Psoas muscle (tissue), 8 donors: ENCODE measurements at regions of chr16 and their contacts with region 1.

Region 1: DNA sequence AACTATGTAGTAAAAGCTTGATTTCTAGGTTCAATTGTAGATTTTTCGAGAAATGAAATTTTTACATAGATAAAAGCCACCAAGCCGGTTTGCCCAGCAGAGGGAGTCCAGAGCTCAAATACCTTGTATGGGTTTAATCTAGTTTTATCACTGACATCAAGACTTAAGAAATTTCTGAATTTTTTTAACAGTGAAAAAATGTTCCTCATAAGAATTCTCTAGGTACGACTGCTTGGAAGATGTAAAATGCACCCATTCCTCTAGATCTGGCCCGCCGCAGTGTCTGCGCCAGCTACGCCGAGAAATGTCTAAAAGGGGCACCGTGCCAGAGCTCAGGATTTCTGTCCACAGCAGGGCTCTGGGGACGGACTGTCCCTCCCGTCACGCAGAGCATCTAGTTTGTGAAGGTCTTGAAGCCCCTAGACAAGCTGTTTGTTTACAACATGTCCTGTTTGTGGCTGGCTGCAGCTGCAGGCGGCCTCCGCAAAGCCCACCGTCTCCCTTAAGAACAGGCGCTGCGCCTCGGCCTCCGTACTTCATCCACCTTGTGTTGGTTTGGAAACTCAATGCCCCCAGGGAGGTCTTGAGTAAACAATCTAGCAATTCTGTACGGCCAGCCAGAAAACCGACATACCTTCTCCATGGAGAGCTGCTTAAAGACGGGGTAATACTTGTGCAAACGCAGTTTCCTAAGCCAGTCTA is 24.8 kb downstream of the MAP1LC3B start:
- DNase-seq: no peak
- ATAC-seq: peak in 1 of 4 donors; percentile 53
- H3K4me3 ChIP-seq: no peak overlapping the region
- H3K27ac ChIP-seq: no peak overlapping the region
- H3K4me1 ChIP-seq: no peaks in the 10 kb centered on the region
- H3K27me3 ChIP-seq: no peaks in the 10 kb centered on the region
- CTCF ChIP-seq: peak; percentile 69

Region 2: GRCh38 chr16:87484487-87485331 is 67.7 kb after region 1 on chr16:
- intact Hi-C with region 1: no loop called
- DNase-seq: no peak
- ATAC-seq: no peak
- H3K4me3 ChIP-seq: no peak overlapping the region
- H3K27ac ChIP-seq: peak overlapping the region; percentile 50
- H3K4me1 ChIP-seq: peaks cover 72% of the 10 kb centered on the region
- H3K27me3 ChIP-seq: no peaks in the 10 kb centered on the region
- CTCF ChIP-seq: no peak

Region 3: DNA sequence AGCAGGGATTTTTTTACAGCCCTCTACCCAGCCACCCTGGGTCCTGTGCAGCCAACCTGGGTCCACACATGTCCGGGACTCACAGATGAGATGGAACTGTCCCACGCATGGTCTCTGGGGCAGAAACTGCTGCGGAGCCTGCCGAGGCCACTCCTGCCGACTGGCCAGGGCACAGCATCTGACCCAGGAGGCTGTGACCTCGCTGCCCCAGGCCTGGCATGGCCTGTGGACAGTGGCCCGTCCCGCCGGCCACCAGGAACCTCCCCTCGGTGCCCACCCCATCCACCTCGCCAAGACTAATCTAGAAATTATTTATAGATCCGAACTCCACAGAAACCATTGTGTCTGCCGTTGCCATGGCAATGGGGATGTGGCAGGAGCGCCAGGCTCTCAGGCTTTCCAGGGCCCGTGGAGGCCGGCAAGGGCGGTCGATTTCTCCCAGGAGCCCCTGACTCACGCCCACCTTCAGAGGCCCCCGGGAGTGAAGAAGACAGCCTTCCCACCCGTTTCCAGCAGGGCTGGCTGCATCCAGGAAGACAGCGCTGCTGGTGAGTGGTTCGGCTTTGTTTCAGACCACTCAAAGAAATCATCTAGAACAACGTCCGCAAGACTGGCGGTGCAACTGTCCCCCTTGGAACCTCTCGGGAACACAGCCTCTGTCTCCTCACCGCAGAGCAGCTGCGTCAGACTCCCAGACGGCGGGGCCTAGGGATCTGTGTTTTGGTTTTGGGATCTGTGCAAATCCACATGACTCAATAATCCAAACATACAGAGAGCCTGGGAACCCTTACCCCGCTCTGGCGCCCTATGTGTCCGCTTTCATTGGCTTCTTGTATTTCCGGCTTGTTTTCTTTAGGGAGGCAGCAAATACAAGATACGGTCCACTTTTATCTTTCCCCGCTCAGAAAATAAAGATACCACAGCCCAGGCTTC is 124.2 kb after region 1 on chr16:
- intact Hi-C with region 1: loop called in 1 of 2 experiments (anchors 5 kb)
- DNase-seq: no peak
- ATAC-seq: no peak
- H3K4me3 ChIP-seq: no peak overlapping the region
- H3K27ac ChIP-seq: peak overlapping the region; percentile 30
- H3K4me1 ChIP-seq: no peaks in the 10 kb centered on the region
- H3K27me3 ChIP-seq: peaks cover 0 to 79% (median 29%) of the 10 kb centered on the region in 3 donors
- CTCF ChIP-seq: no peak

Region 4: GRCh38 chr16:87571136-87571867 is 154.3 kb after region 1 on chr16:
- intact Hi-C with region 1: loop called (anchors 5 kb)
- DNase-seq: peak in 1 of 2 donors; percentile 48
- ATAC-seq: peak; percentile 83 to 94 (median 91)
- H3K4me3 ChIP-seq: no peak overlapping the region
- H3K27ac ChIP-seq: peak overlapping the region; percentile 30
- H3K4me1 ChIP-seq: no peaks in the 10 kb centered on the region
- H3K27me3 ChIP-seq: peaks cover 0 to 23% (median 1%) of the 10 kb centered on the region in 3 donors
- CTCF ChIP-seq: peak; percentile 51